Ascending aorta (tissue), 2 donors: ENCODE measurements at regions of chr7 and their contacts with region 1.

Region 1: GRCh38 chr7:39051707-39052106 is 74.0 kb downstream of the POU6F2 start:
- DNase-seq: no peak
- H3K4me3 ChIP-seq: no peak overlapping the region
- H3K27ac ChIP-seq: no peak overlapping the region
- H3K4me1 ChIP-seq: no peaks in the 10 kb centered on the region
- H3K27me3 ChIP-seq: no peaks in the 10 kb centered on the region
- CTCF ChIP-seq: no peak

Region 2: GRCh38 chr7:38920731-38921130 is 131.0 kb before region 1 on chr7:
- intact Hi-C with region 1: no loop called
- DNase-seq: no peak
- H3K4me3 ChIP-seq: no peak overlapping the region
- H3K27ac ChIP-seq: no peak overlapping the region
- H3K4me1 ChIP-seq: no peaks in the 10 kb centered on the region
- H3K27me3 ChIP-seq: no peaks in the 10 kb centered on the region
- CTCF ChIP-seq: no peak

Region 3: GRCh38 chr7:39153647-39154046 is 101.9 kb after region 1 on chr7:
- intact Hi-C with region 1: loop called (anchors 10 kb)
- DNase-seq: no peak
- H3K4me3 ChIP-seq: no peak overlapping the region
- H3K27ac ChIP-seq: no peak overlapping the region
- H3K4me1 ChIP-seq: no peaks in the 10 kb centered on the region
- H3K27me3 ChIP-seq: no peaks in the 10 kb centered on the region
- CTCF ChIP-seq: no peak